ENCODE measurements at regions of chr10 and their contacts with region 1.

Region 1: GRCh38 chr10:109883859-109884771 is 39.2 kb downstream of the XPNPEP1 start:
- DNase-seq: peak; percentile 66 to 79 (median 71)
- ATAC-seq: peak; percentile 94
- H3K4me3 ChIP-seq: no peak overlapping the region
- H3K27ac ChIP-seq: peak overlapping the region in 2 of 4 donors; percentile 58 to 60
- H3K4me1 ChIP-seq: peaks cover 9% of the 10 kb centered on the region
- H3K27me3 ChIP-seq: no peaks in the 10 kb centered on the region
- CTCF ChIP-seq: peak; percentile 89 to 98 (median 96)
- POLR2A ChIP-seq: no peak

Region 2: DNA sequence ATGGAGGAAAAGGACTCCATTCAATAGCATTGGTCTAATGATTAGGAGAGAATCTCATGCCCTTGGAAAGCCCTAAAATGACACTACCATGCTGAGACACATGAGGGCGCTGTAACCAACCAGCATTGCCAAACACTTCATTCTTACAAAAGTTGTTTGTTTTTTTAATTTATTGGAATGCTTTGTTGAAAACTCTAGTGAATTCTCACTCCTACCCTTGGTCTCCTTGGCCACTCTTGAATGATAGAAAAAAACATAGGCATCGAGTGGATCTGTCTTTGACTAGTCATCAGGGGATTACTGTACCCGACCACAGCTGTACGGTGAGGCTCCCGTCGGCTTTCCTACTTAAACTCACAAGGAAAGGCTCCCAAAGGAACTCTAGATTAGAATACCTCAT is 94.4 kb after region 1 on chr10:
- intact Hi-C with region 1: no loop called
- DNase-seq: peak; percentile 39 to 69 (median 62)
- ATAC-seq: no peak
- H3K4me3 ChIP-seq: no peak overlapping the region
- H3K27ac ChIP-seq: no peak overlapping the region
- H3K4me1 ChIP-seq: peaks cover 47% of the 10 kb centered on the region
- H3K27me3 ChIP-seq: no peaks in the 10 kb centered on the region
- CTCF ChIP-seq: peak in 6 of 7 experiments; percentile 60 to 76 (median 66)
- POLR2A ChIP-seq: no peak

Region 3: GRCh38 chr10:110016039-110016438 is 131.9 kb after region 1 on chr10:
- intact Hi-C with region 1: loop called (anchors 10 kb)
- DNase-seq: peak in 2 of 4 donors; percentile 30 to 48
- ATAC-seq: peak; percentile 68
- H3K4me3 ChIP-seq: no peak overlapping the region
- H3K27ac ChIP-seq: no peak overlapping the region
- H3K4me1 ChIP-seq: peaks cover 42% of the 10 kb centered on the region
- H3K27me3 ChIP-seq: no peaks in the 10 kb centered on the region
- CTCF ChIP-seq: peak in 6 of 7 experiments; percentile 24 to 55 (median 41)
- POLR2A ChIP-seq: no peak

Region 4: DNA sequence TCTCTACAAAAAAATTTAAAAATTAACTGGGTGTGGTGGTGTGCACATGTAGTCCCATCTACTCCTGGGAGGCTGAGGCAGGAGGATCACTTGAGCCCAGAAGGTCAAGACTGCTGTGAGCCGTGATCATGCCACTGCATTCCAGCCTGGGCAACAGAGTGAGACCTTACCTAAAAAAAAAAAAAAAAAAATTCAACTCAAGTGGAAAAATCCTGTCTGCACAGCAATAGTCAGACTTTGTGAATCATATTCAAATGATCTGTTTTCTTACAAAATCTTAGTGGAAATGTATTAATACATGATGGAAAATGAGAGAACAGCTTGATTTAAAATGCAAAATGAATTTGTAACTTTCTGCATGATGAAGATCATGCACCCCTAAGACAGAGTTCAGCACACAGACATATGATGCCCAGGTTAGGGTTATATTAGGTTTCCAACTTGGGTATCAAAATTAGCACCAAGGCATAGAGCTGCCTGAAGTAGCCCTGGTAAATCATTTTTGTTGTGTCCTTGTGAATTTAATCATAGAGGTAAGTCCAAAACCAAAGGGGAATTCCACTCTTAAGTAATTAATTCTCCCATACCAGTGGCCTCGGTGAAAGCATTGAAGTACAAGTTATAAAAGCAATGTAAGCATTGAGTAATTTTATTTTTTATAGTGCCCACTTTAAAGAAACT is 217.5 kb after region 1 on chr10:
- intact Hi-C with region 1: loop called (anchors 10 kb)
- DNase-seq: no peak
- ATAC-seq: no peak
- H3K4me3 ChIP-seq: no peak overlapping the region
- H3K27ac ChIP-seq: no peak overlapping the region
- H3K4me1 ChIP-seq: no peaks in the 10 kb centered on the region
- H3K27me3 ChIP-seq: no peaks in the 10 kb centered on the region
- CTCF ChIP-seq: no peak
- POLR2A ChIP-seq: no peak